Mucosa of descending colon (tissue), 3 donors: ENCODE measurements at regions of chr6 and their contacts with region 1.

Region 1: GRCh38 chr6:44096612-44097011 is 30.6 kb downstream of the MRPL14 start:
- DNase-seq: peak; percentile 67 to 89 (median 83)
- ATAC-seq: peak; percentile 85
- H3K4me3 ChIP-seq: no peak overlapping the region
- H3K4me1 ChIP-seq: peaks cover 11% of the 10 kb centered on the region
- CTCF ChIP-seq: peak; percentile 70

Region 2: DNA sequence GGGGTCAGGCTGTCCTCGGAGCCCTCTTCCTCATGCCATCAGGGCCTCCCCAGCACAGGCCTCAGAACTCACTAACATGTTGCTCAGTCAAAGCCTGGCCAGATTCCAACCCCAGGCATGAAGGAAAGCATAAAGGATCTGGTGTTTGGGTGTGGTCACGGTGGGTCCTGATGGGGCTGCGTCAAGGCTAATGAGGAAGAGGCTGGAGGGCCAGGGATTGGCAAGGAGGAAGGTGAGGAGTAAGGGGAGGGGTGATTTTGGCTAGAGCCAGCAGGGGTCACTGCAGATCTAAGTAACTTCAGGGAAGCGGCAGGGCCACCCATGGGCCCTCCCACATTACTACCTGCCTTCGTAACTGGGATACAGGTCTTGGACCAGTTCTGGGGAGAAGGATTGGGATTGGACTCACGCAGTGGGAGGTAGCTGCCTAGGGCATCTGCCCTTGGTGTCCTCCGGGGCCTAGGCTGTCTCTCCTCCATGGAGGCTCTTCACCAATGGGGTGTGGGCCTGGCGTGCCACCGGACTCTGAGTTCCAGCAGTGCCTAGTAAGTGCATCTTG is 372.8 kb before region 1 on chr6:
- intact Hi-C with region 1: no loop called
- DNase-seq: peak; percentile 82 to 92 (median 83)
- ATAC-seq: peak; percentile 89
- H3K4me3 ChIP-seq: no peak overlapping the region
- H3K4me1 ChIP-seq: peaks cover 13% of the 10 kb centered on the region
- CTCF ChIP-seq: peak; percentile 36

Region 3: GRCh38 chr6:44041461-44042260 is 55.0 kb before region 1 on chr6:
- intact Hi-C with region 1: no loop called
- DNase-seq: peak in 1 of 3 donors; percentile 40
- ATAC-seq: peak; percentile 32
- H3K4me3 ChIP-seq: no peak overlapping the region
- H3K4me1 ChIP-seq: no peaks in the 10 kb centered on the region
- CTCF ChIP-seq: no peak

Region 4: GRCh38 chr6:44151348-44152108 is 54.9 kb after region 1 on chr6:
- intact Hi-C with region 1: loop called (anchors 2 to 5 kb)
- DNase-seq: peak; percentile 78 to 86 (median 78)
- ATAC-seq: peak; percentile 91
- H3K4me3 ChIP-seq: no peak overlapping the region
- H3K4me1 ChIP-seq: peaks cover 7% of the 10 kb centered on the region
- CTCF ChIP-seq: peak; percentile 98